Breast epithelium (tissue), 4 donors: ENCODE measurements at regions of chr11 and their contacts with region 1.

Region 1: DNA sequence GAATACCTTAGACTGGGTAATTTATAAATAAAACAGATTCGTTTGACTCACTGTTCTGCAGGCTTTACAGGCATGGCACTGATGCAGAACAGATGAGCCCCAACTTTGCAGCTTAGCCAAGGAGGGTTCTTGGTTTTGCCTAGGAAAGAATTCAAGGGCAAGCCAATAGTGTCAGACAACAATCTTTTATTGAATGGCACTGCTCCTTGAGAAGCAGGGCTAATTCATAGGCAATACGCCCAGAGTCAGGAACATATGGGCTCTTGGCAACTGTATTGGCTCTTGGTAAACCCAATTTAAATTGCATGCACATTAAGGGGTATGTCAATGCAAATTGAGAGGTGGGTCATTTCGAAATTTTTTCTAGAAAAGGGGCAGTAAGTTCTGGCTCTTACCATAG is 87.9 kb downstream of the RAB38 start:
- DNase-seq: no peak
- H3K4me3 ChIP-seq: no peak overlapping the region
- H3K27ac ChIP-seq: no peak overlapping the region
- H3K4me1 ChIP-seq: no peaks in the 10 kb centered on the region
- H3K27me3 ChIP-seq: no peaks in the 10 kb centered on the region
- CTCF ChIP-seq: no peak
- POLR2A ChIP-seq: no peak

Region 2: DNA sequence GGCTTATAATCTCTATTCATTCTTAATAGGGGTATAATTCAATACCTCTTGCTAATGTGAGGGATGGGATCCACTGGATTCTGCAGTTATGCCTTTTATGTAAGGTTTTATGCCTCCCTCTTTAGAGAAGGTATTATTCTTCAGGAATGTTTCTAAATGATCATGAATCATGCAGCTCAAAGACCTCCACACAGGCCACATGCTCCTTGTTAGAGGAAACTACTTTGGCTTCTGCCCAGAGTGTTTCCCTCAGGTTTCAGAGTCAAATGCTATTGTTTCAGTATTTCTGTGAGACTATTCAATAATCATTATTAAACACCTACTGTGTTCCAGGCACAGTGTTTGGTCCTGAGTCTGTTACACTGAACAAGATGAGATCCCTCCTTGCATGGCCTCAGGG is 28.0 kb before region 1 on chr11:
- intact Hi-C with region 1: no loop called
- DNase-seq: no peak
- H3K4me3 ChIP-seq: no peak overlapping the region
- H3K27ac ChIP-seq: no peak overlapping the region
- H3K4me1 ChIP-seq: no peaks in the 10 kb centered on the region
- H3K27me3 ChIP-seq: no peaks in the 10 kb centered on the region
- CTCF ChIP-seq: no peak
- POLR2A ChIP-seq: no peak

Region 3: DNA sequence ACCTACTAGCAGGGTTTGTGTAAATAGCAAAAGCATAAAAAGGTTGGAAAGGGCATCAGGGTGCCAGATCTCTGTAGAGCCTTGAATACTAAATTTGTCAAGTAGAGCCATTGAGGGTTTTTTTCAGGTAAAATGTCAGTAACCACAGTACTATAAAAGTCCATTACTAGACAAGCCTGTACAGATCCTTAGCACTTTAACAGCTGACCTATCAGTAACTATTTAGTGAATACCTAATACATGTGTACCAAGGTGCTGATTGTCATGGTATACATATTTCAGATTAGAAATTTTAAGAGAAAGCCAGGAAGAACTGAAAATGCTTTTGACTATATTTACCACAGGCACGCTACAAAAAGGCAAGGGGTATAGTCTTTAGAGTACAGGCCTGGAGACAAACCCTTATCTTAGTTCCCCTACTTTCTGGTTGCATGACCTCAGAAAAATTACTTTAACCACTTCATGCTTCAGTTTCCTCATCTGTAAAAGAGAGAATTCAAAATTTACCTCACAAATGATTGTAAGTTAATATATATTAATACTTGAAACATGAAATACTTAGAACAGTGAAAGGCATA is 30.0 kb after region 1 on chr11:
- intact Hi-C with region 1: loop called (anchors 1 kb)
- DNase-seq: no peak
- H3K4me3 ChIP-seq: no peak overlapping the region
- H3K27ac ChIP-seq: no peak overlapping the region
- H3K4me1 ChIP-seq: no peaks in the 10 kb centered on the region
- H3K27me3 ChIP-seq: no peaks in the 10 kb centered on the region
- CTCF ChIP-seq: no peak
- POLR2A ChIP-seq: no peak